Activated CD4-positive, alpha-beta memory T cell treated with anti-CD3 and anti-CD28 coated beads for 36 hours (primary cell): ENCODE measurements at regions of chr7 and their contacts with region 1.

Region 1: DNA sequence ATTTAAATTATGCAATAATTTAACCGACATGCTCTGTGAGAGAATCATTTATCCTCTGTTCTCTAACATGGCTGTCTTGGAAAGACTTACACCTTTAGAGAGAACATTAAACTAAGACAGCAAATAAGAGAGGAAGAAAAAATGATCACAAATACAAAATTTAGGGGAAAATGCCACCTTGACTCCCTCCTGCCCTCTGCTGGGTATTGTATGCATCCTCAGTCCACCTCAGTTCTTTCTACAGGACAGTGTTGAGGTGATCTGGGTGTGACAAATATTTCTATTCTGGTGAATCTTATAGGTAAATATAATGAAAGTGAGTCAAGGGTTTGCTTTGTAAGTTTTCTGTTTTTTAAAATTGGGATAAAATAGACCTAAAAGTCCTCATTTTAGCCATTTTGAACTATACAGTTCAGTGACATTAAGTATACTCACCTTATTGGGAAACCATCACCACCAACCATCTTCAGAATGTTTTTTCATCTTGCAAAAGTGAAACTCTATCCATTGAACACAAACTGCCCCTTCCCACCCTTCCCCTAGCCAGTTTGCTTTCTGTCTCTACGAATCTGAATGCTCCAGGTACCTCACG is 61.5 kb upstream of the ELMO1 start:
- DNase-seq: peak; percentile 33
- H3K4me3 Mint-ChIP-seq: no peak overlapping the region
- H3K27ac Mint-ChIP-seq: no peak overlapping the region
- H3K4me1 Mint-ChIP-seq: no peaks in the 10 kb centered on the region
- H3K27me3 Mint-ChIP-seq: peaks cover 7% of the 10 kb centered on the region

Region 2: GRCh38 chr7:37208528-37208927 is 301.6 kb before region 1 on chr7:
- CTCF ChIA-PET with region 1: interaction called, 5 read pairs
- POLR2A ChIA-PET with region 1: no interaction called
- intact Hi-C with region 1: loop called (anchors 1 kb)
- DNase-seq: peak; percentile 36
- H3K4me3 Mint-ChIP-seq: no peak overlapping the region
- H3K27ac Mint-ChIP-seq: peak overlapping the region; percentile 44
- H3K4me1 Mint-ChIP-seq: peaks cover 18% of the 10 kb centered on the region
- H3K27me3 Mint-ChIP-seq: no peaks in the 10 kb centered on the region

Region 3: DNA sequence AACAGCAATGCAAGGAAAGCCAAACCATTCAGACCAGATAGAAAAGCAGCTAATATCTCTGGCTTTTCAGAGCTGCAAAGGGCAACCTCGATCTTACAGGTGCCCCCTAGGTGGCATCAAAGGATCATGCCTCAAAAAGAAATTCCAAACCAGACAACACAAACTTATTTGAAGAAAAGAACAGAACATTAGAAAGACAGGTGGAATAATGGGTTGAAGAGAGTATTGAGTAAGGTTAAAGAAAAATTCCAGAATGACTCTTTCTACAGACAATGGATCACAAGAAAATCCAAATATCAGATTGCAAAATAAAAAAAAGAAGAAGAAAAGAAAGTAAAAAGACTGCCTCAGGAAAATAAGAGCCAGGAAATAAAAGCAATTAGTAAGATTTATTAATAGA is 275.2 kb before region 1 on chr7:
- CTCF ChIA-PET with region 1: interaction called, 22 read pairs
- POLR2A ChIA-PET with region 1: no interaction called
- intact Hi-C with region 1: no loop called
- DNase-seq: no peak
- H3K4me3 Mint-ChIP-seq: no peak overlapping the region
- H3K27ac Mint-ChIP-seq: no peak overlapping the region
- H3K4me1 Mint-ChIP-seq: peaks cover 19% of the 10 kb centered on the region
- H3K27me3 Mint-ChIP-seq: no peaks in the 10 kb centered on the region

Region 4: GRCh38 chr7:37284805-37285231 is 225.3 kb before region 1 on chr7:
- CTCF ChIA-PET with region 1: interaction called, 17 read pairs
- POLR2A ChIA-PET with region 1: no interaction called
- intact Hi-C with region 1: no loop called
- DNase-seq: peak; percentile 57
- H3K4me3 Mint-ChIP-seq: no peak overlapping the region
- H3K27ac Mint-ChIP-seq: no peak overlapping the region
- H3K4me1 Mint-ChIP-seq: peaks cover 45% of the 10 kb centered on the region
- H3K27me3 Mint-ChIP-seq: no peaks in the 10 kb centered on the region

Region 5: DNA sequence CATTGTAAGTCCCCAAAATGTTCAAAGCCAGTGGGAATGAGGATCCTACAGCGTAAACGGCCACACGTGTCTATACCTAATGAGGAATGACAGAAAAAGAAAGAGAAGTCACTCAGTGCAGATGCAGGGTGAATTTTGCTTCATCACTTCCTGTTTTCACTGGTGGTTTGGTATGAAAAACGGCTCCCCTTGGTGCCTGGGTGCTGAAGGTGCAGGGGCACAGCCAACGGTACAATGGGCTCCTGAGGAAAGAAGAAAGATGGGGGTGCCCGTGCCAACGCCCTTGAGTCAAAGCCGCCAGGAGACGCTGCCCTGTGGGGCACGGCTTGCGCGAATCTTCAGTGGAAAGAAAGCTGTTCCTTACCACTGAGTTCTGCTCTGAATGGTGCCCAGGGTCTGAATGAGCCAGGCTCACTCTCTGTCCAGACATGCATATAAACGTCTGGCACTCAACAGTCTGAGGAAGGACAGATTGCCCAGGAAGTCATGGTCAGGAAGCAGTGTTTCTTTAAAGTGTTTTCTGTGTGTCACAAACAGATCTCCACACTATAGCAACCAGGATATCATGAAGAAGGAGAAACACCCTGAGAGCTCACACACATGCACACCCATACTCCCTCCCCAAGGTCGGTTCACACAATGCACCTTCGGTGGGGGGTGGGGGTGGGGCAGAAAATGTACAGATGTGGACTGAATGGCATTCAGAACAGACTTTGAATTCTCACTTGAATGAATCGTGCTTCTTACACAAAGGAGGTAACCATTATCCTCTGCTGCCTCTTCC is 167.3 kb before region 1 on chr7:
- CTCF ChIA-PET with region 1: no interaction called
- POLR2A ChIA-PET with region 1: no interaction called
- intact Hi-C with region 1: no loop called
- DNase-seq: peak; percentile 85
- H3K4me3 Mint-ChIP-seq: peak overlapping the region; percentile 96
- H3K27ac Mint-ChIP-seq: peak overlapping the region; percentile 94
- H3K4me1 Mint-ChIP-seq: peaks cover 79% of the 10 kb centered on the region
- H3K27me3 Mint-ChIP-seq: no peaks in the 10 kb centered on the region

Region 6: GRCh38 chr7:37495574-37496184 is 14.5 kb before region 1 on chr7:
- CTCF ChIA-PET with region 1: interaction called, 44 read pairs
- POLR2A ChIA-PET with region 1: no interaction called
- intact Hi-C with region 1: no loop called
- DNase-seq: no peak
- H3K4me3 Mint-ChIP-seq: no peak overlapping the region
- H3K27ac Mint-ChIP-seq: no peak overlapping the region
- H3K4me1 Mint-ChIP-seq: peaks cover 8% of the 10 kb centered on the region
- H3K27me3 Mint-ChIP-seq: no peaks in the 10 kb centered on the region

Region 7: DNA sequence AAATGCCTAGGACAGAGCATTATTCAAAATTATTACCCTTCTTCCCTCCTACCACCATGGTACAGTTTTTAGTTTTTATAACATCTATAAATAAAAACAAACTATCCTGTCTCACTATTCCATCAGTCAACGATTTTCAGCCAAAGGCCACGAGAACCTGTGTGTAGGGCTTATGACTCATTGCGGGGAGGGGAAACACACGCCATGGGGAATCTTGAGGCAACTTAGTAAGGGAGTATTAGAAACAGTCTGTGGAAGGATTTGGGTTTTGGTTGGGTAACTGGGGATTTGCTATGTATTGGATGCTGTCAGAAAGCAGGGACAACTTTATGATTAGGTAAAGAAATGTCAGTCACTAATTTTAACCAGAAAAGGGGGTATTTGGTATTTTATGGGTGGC is 188.1 kb after region 1 on chr7:
- CTCF ChIA-PET with region 1: no interaction called
- POLR2A ChIA-PET with region 1: no interaction called
- intact Hi-C with region 1: no loop called
- DNase-seq: no peak
- H3K4me3 Mint-ChIP-seq: no peak overlapping the region
- H3K27ac Mint-ChIP-seq: no peak overlapping the region
- H3K4me1 Mint-ChIP-seq: no peaks in the 10 kb centered on the region
- H3K27me3 Mint-ChIP-seq: peaks cover 7% of the 10 kb centered on the region